Posterior vena cava (tissue), 2 donors: ENCODE measurements at regions of chr16 and their contacts with region 1.

Region 1: DNA sequence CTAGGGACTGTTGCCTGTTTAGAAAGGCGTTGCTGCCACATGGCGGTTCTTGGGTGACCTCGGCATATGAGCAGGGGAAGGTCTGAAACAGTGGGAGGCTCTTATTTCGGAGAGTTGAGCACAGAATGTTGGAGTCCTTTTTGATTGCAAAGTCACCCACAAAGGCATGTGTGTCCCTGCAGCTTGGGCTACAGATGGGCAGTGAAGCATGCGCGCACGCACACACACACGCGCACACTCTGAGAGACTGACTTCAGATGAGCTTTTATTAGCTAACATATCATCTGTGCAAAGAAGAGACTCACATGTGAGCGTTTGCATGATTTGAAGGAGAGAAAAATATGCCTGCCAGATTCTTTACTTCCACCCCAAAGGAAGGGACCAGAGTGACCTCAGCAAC is 104.5 kb downstream of the SHISA9 start:
- DNase-seq: no peak

Region 2: DNA sequence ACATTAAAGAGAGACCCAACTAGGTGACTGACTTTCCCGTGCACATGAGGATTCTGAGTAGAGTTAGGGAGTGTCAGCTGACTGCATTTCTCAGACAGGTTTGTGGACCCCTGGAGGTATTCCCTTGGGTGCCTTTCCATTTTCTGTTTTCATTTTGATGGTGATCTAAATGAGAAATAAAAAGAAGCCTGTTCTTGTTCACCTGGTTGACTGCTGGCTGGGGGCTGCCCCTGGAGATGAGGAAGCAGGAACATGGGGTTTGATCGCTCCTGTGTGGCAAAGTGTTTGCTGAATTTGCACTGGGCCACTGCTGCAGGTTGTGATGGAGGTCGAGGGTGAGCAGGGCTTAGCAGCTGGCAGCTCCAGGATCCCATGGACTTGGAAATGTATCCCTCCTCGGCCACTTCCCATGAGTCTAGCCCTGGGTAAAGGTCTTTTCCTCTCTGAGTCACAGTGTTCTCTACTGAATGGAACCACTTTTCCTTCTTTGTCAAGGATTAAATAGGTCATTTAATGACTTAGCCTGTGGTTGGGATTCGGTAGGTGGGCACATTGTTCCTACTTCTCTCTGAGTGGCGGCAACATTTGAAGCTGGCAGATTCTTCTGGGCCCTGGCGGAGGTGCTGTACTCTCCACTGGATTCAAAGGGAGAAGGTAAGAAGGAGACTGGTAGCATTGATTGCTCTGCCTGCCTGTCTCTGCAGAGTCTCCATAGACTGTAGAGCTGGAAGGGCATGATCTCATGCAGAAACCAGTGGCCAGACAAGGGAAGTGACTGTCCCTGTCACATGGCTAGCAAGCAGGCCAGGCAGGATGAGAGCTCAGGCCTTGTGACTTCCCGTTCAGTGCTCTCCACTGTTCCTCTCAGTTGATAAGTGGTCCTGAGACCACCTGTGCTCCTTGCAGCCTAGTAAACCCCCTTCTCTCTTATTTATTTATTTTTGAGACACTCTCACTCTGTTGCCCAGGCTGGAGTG is 1011.4 kb before region 1 on chr16:
- intact Hi-C with region 1: no loop called
- DNase-seq: no peak

Region 3: DNA sequence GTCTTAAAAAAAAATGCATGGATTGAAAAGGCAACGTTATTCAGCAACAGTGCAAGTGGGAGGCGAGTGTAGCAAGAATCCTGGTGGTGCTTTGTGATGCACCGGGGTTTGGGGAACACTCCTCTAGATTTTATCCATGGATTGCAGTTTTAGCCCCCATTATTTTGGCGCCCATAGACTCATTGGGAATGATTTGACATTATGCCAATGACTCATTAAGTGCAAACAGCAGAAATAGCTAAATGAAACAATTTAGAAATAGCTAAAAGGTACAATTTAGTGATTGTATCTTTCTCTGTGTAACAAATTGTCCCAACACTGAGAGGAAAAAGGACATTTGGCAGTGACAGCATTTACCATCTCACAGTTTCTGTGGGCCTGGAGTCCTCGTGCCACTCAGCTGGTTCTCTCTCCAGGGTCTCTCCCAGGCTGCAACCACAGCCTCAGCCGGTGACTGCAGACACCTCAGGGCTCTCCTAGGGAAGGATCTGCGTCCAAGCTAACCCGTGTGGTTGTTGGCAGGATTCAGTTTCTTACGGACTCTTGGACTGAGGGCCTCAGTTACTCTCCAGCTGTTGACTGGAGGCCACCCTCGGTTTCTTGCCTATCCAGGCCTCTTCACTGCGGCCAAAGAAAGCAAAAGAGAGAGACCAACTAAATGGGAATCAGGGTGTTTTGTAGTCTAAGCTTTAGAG is 630.7 kb before region 1 on chr16:
- intact Hi-C with region 1: no loop called
- DNase-seq: no peak

Region 4: GRCh38 chr16:12901597-12902461 is 104.0 kb before region 1 on chr16 and contains the start of gene SHISA9:
- intact Hi-C with region 1: no loop called
- DNase-seq: no peak
- total RNA-seq, gene SHISA9: 0.14 TPM in 1 of 2 donors, not detected in the other

Region 5: GRCh38 chr16:13056607-13057006 is 50.8 kb after region 1 on chr16:
- intact Hi-C with region 1: loop called in 1 of 2 experiments (anchors 10 kb)
- DNase-seq: no peak

Region 6: DNA sequence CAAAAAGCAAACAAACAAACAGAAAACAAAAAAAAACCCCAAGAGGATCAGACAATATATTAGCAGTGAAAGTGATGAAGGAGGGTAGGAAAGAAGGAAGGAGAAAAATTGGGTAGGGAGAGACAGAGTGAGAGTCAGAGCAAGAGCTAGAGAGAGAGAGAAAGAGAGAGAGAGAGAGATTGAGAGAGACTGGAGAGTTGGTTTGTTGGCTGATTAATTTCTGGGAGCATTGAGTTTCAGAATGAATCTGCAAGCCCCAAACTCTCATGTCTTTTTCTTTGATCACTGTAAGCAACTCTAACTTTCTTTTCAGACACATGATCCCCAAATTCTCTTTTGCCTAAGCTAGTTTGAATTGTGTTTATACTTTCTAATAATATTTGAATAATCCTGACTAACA is 283.7 kb after region 1 on chr16:
- intact Hi-C with region 1: no loop called
- DNase-seq: no peak